ENCODE measurements at regions of chr21 and their contacts with region 1.

Region 1: GRCh38 chr21:42833439-42833815 is 45.9 kb downstream of the WDR4 start:
- DNase-seq: peak; percentile 85
- ATAC-seq: peak; percentile 91
- H3K4me3 Mint-ChIP-seq: peak overlapping the region; percentile 39
- H3K27ac Mint-ChIP-seq: peak overlapping the region; percentile 55
- H3K4me1 Mint-ChIP-seq: peaks cover 36% of the 10 kb centered on the region
- H3K27me3 Mint-ChIP-seq: peaks cover 3% of the 10 kb centered on the region

Region 2: GRCh38 chr21:42593007-42593806 is 240.2 kb before region 1 on chr21:
- CTCF ChIA-PET with region 1: interaction called, 5 read pairs
- POLR2A ChIA-PET with region 1: no interaction called
- intact Hi-C with region 1: loop called (anchors 2 to 5 kb)
- DNase-seq: peak; percentile 87
- ATAC-seq: peak; percentile 96
- H3K4me3 Mint-ChIP-seq: no peak overlapping the region
- H3K27ac Mint-ChIP-seq: no peak overlapping the region
- H3K4me1 Mint-ChIP-seq: peaks cover 18% of the 10 kb centered on the region
- H3K27me3 Mint-ChIP-seq: peaks cover 2% of the 10 kb centered on the region

Region 3: DNA sequence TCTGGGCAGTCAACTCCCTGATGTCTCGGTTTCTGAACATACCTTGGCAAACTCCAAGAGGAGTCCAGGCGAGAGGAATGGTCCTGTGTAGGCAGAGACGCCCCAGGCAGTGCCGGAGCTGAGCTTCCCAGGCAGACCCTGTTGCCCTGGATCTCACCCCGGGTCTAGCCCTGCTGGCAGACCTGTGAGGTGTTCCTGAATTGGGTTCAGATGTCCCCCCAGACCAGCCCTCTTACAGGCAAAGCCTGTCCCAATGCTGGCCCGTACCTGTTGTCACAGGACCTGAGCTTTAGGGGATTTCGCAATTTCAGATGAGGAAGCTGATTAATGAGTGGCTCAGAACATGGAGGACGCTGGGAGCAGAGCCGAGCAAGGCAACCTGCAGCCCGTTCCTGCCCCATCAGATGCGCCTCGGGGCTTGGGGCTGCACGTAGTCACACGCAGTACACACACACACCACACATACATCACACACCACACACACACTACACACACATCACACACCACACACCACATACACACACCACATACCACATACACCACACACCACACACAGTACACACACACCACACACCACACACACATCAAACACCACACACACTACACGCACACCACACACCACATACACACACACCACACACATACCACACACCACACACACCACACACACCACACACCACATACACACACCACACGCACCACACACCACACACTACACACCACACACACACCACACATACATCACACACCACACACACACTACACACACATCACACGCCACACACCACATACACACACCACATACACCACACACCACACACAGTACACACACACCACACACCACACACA is 218.4 kb before region 1 on chr21:
- CTCF ChIA-PET with region 1: interaction called, 3 read pairs
- POLR2A ChIA-PET with region 1: no interaction called
- intact Hi-C with region 1: loop called in 1 of 2 experiments (anchors 5 kb)
- DNase-seq: peak; percentile 84
- ATAC-seq: peak; percentile 88
- H3K4me3 Mint-ChIP-seq: no peak overlapping the region
- H3K27ac Mint-ChIP-seq: no peak overlapping the region
- H3K4me1 Mint-ChIP-seq: peaks cover 7% of the 10 kb centered on the region
- H3K27me3 Mint-ChIP-seq: no peaks in the 10 kb centered on the region

Region 4: GRCh38 chr21:42652527-42653230 is 180.7 kb before region 1 on chr21:
- CTCF ChIA-PET with region 1: interaction called, 3 read pairs
- POLR2A ChIA-PET with region 1: no interaction called
- intact Hi-C with region 1: loop called in 1 of 2 experiments (anchors 5 kb)
- DNase-seq: no peak
- ATAC-seq: no peak
- H3K4me3 Mint-ChIP-seq: peak overlapping the region; percentile 68
- H3K27ac Mint-ChIP-seq: peak overlapping the region; percentile 39
- H3K4me1 Mint-ChIP-seq: peaks cover 17% of the 10 kb centered on the region
- H3K27me3 Mint-ChIP-seq: peaks cover 3% of the 10 kb centered on the region

Region 5: DNA sequence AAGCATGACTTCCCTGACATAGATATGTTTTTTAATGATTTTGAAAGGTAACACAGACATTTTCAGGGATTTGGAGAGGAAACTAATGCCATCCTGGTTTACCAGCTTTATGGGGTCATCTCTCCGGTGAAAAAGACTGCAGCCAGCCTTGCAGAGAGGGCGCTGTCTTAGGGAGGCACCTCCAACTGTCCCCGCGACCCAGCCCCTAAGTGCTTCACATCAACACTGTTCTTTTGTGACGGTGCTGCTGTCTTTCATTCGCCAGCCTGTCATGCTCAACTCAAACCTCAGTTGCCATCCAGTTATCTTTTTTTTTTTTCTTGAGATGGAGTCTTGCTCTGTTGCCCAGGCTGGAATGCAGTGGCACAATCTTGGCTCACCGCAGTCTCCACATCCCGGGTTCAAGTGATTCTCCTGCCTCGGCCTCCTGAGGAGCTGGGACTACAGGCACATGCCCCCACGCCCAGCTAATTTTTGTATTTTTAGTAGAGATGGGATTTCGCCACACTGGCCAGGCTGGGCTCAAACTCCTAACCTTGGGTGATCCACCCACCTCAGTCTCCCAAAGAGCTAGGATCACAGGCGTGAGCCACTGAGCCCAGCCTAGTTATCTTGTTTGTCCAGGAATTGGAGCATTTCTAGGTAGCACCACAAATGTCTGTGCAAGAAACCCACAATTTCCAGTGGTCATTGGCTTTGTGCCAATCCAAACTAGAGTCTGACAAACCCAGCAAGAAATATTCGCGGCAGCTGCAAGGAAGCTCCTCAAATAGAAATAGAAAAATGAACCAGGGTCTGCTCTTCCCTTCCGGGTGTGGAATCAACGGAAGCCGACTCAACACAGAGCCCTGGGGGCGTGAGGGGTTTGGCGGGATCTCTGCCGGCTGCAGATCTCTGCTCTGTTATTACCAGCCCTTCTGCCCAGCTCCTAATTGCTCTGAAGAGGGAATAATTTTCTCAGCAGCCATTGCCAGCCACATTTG is 155.8 kb before region 1 on chr21:
- CTCF ChIA-PET with region 1: no interaction called
- POLR2A ChIA-PET with region 1: no interaction called
- intact Hi-C with region 1: no loop called
- DNase-seq: no peak
- ATAC-seq: no peak
- H3K4me3 Mint-ChIP-seq: no peak overlapping the region
- H3K27ac Mint-ChIP-seq: no peak overlapping the region
- H3K4me1 Mint-ChIP-seq: peaks cover 36% of the 10 kb centered on the region
- H3K27me3 Mint-ChIP-seq: no peaks in the 10 kb centered on the region

Region 6: GRCh38 chr21:42818328-42818749 is 15.1 kb before region 1 on chr21:
- CTCF ChIA-PET with region 1: no interaction called
- POLR2A ChIA-PET with region 1: no interaction called
- intact Hi-C with region 1: loop called in 1 of 2 experiments (anchors 1 kb)
- DNase-seq: peak; percentile 82
- ATAC-seq: peak; percentile 89
- H3K4me3 Mint-ChIP-seq: no peak overlapping the region
- H3K27ac Mint-ChIP-seq: no peak overlapping the region
- H3K4me1 Mint-ChIP-seq: no peaks in the 10 kb centered on the region
- H3K27me3 Mint-ChIP-seq: no peaks in the 10 kb centered on the region

Region 7: GRCh38 chr21:42850866-42851391 is 17.5 kb after region 1 on chr21:
- CTCF ChIA-PET with region 1: no interaction called
- POLR2A ChIA-PET with region 1: no interaction called
- intact Hi-C with region 1: no loop called
- DNase-seq: peak; percentile 64
- ATAC-seq: peak; percentile 75
- H3K4me3 Mint-ChIP-seq: no peak overlapping the region
- H3K27ac Mint-ChIP-seq: no peak overlapping the region
- H3K4me1 Mint-ChIP-seq: no peaks in the 10 kb centered on the region
- H3K27me3 Mint-ChIP-seq: no peaks in the 10 kb centered on the region

Region 8: GRCh38 chr21:42868196-42868595 is 34.8 kb after region 1 on chr21:
- CTCF ChIA-PET with region 1: no interaction called
- POLR2A ChIA-PET with region 1: no interaction called
- intact Hi-C with region 1: no loop called
- DNase-seq: no peak
- ATAC-seq: no peak
- H3K4me3 Mint-ChIP-seq: no peak overlapping the region
- H3K27ac Mint-ChIP-seq: no peak overlapping the region
- H3K4me1 Mint-ChIP-seq: peaks cover 13% of the 10 kb centered on the region
- H3K27me3 Mint-ChIP-seq: no peaks in the 10 kb centered on the region

Region 9: GRCh38 chr21:42878993-42879787 is 45.8 kb after region 1 on chr21 and contains the start of gene WDR4:
- CTCF ChIA-PET with region 1: no interaction called
- POLR2A ChIA-PET with region 1: no interaction called
- intact Hi-C with region 1: loop called in 1 of 2 experiments (anchors 1 kb)
- DNase-seq: peak; percentile 99
- ATAC-seq: peak; percentile 93
- H3K4me3 Mint-ChIP-seq: peak within 1 kb of the TSS; percentile 92
- H3K27ac Mint-ChIP-seq: peak within 1 kb of the TSS; percentile 99
- H3K4me1 Mint-ChIP-seq: peaks cover 17% of the 10 kb centered on the region
- H3K27me3 Mint-ChIP-seq: no peaks in the 10 kb centered on the region
- total RNA-seq, gene WDR4: 34.0 to 46.5 TPM

Measured in activated CD4-positive, alpha-beta T cell treated with anti-CD3 and anti-CD28 coated beads for 36 hours (primary cell).